ENCODE measurements at regions of chr1 and their contacts with region 1.

Region 1: GRCh38 chr1:26864610-26865527 is 1.9 kb downstream of the SFN start:
- DNase-seq: peak; percentile 94 to 99
- H3K4me3 ChIP-seq: peak overlapping the region; percentile 71 to 72
- H3K27ac ChIP-seq: peak overlapping the region; percentile 97
- H3K4me1 ChIP-seq: peaks cover 0 to 13% of the 10 kb centered on the region in 2 donors
- H3K27me3 ChIP-seq: no peaks in the 10 kb centered on the region
- CTCF ChIP-seq: no peak

Region 2: GRCh38 chr1:26233903-26234643 is 630.8 kb before region 1 on chr1 and contains the start of gene CEP85:
- intact Hi-C with region 1: no loop called
- DNase-seq: peak; percentile 83 to 98
- H3K4me3 ChIP-seq: peak within 1 kb of the TSS; percentile 73 to 87
- H3K27ac ChIP-seq: peak within 1 kb of the TSS; percentile 76 to 84
- H3K4me1 ChIP-seq: no peaks in the 10 kb centered on the region
- H3K27me3 ChIP-seq: no peaks in the 10 kb centered on the region
- CTCF ChIP-seq: peak; percentile 63 to 81 (median 63)
- total RNA-seq, gene CEP85: 5.0 TPM

Region 3: DNA sequence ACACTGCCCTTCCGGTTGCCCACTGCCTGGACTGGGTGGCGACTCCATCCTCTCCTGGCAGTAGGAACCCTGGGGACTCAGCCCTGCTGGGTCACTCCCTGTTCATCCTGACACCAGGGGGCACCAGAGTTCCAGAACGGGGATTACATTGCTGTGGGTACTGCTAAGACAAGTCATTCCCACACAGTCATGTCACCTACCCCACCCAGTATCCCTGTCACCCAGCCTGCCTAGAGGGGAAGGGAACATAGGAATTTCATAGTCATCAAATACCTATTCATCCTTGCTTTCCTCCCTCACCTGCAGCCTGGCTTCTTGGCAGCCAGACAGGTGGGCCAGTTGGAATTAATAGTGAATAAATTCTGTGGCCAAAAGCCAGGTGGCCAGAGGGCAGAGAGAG is 11.7 kb before region 1 on chr1:
- intact Hi-C with region 1: loop called (anchors 1 kb)
- DNase-seq: peak; percentile 60 to 95
- H3K4me3 ChIP-seq: no peak overlapping the region
- H3K27ac ChIP-seq: peak overlapping the region; percentile 18 to 36
- H3K4me1 ChIP-seq: peaks cover 0 to 8% of the 10 kb centered on the region in 2 donors
- H3K27me3 ChIP-seq: no peaks in the 10 kb centered on the region
- CTCF ChIP-seq: peak; percentile 81 to 86 (median 85)

Region 4: DNA sequence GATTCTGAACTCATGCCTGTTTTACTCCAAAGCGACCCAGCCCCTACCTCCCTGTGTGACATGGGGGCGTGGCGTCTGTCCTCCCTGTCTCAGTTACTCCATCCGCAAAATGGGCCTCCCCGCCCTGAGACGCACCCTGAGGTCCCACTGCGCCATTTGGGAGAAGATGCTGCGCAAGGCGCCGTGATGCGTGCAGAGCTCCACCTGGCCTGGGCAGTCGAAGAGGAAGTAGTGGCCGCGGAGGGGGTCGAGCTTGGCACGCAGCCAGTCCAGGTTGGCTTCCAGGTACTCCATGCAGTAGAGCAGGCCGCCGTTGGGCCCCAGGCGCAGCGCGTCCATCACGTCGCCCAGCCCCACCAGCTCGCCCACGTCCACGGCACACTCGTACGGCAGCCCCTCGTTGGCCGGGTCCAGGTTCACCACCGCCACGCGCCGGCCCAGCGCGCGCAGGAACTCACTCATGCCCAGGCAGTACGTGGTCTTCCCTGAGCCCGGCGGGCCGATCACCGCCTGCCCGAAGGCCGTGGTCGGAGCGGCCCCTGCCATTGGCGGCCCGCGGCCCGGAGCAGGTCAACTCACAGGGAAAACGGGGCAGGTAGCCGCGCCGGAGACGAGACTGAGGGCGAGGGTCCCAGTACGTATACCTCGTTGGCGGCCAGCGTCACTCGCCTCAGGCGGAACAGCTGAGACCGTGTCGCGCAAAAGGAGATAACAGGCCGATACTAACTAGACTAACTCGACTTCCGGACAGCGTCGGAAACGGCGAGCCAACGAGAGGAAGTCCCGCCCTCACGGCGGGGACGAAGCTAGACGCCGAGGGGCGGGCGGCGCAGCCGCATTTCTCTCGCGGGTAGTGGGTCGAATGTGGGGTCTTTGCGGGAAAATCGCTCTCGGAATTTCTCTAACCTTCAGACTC is 24.9 kb after region 1 on chr1 and contains the start of gene GPN2:
- intact Hi-C with region 1: loop called (anchors 1 kb)
- DNase-seq: peak; percentile 18 to 84
- H3K4me3 ChIP-seq: peak within 1 kb of the TSS; percentile 92 to 97
- H3K27ac ChIP-seq: peak within 1 kb of the TSS; percentile 92 to 96
- H3K4me1 ChIP-seq: peaks cover 9 to 20% of the 10 kb centered on the region in 2 donors
- H3K27me3 ChIP-seq: no peaks in the 10 kb centered on the region
- CTCF ChIP-seq: no peak
- total RNA-seq, gene GPN2: 7.5 TPM